Kidney (tissue), 22 donors: ENCODE measurements at regions of chr19 and their contacts with region 1.

Region 1: GRCh38 chr19:52139252-52140031 is at the start of gene ZNF616:
- DNase-seq: peak; percentile 95 to 98 (median 98)
- H3K4me3 ChIP-seq: peak within 1 kb of the TSS; percentile 100
- H3K27ac ChIP-seq: peak within 1 kb of the TSS; percentile 92 to 96
- H3K4me1 ChIP-seq: peaks cover 0 to 13% (median 8%) of the 10 kb centered on the region in 3 donors
- H3K27me3 ChIP-seq: no peaks in the 10 kb centered on the region
- CTCF ChIP-seq: peak; percentile 82
- total RNA-seq, gene ZNF616: 12.8 TPM

Region 2: GRCh38 chr19:52237771-52238400 is 98.4 kb after region 1 on chr19:
- intact Hi-C with region 1: loop called (anchors 10 kb)
- DNase-seq: peak in 4 of 5 donors; percentile 69 to 79 (median 74)
- H3K4me3 ChIP-seq: no peak overlapping the region
- H3K27ac ChIP-seq: no peak overlapping the region
- H3K4me1 ChIP-seq: no peaks in the 10 kb centered on the region
- H3K27me3 ChIP-seq: no peaks in the 10 kb centered on the region
- CTCF ChIP-seq: peak; percentile 93